ENCODE measurements at regions of chr17 and their contacts with region 1.

Region 1: DNA sequence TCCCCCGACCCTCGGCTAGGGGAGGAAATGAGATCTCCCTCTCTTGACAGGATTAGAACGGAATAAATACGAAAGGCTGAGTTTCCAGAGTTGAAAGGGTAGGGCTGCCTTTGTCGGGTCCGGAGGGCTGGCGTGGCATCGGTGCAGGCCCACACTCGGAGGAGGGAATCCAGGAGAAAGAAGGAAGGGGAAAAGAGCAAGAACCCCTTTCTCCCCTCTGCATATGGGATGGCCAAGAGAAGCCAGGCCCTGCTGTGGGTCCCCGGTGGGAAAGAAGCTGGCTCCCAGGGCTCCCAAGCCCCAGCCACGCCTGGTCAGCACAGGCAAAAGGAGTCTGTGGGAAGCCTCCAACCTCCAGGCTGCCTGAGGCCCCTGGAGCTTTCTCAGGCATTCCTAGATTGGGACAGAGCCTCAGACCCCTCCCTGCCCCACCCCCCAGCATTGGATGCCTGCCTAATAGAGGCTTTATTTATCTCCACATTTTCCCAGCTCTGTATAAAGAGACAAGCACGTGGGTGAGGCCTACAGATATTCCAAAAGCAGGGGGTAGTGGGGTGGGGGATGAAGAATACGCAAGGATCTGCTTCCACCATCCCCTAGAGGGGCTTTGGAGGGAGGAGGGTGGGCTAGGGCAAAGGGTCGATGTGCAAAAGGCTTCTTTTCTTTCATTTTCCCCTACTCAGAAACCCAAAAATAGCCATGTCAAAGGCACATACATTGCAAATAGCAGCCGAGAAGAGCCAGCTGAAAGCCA is 56.3 kb downstream of the MPRIP start:
- DNase-seq: peak; percentile 70 to 79 (median 76)
- ATAC-seq: peak; percentile 19 to 68 (median 50)
- H3K4me3 ChIP-seq: peak overlapping the region in 1 of 12 donors; percentile 19
- H3K27ac ChIP-seq: peak overlapping the region; percentile 29 to 85 (median 73)
- H3K4me1 ChIP-seq: peaks cover 20 to 100% (median 82%) of the 10 kb centered on the region in 12 donors
- H3K27me3 ChIP-seq: no peaks in the 10 kb centered on the region
- CTCF ChIP-seq: no peak
- POLR2A ChIP-seq: no peak

Region 2: DNA sequence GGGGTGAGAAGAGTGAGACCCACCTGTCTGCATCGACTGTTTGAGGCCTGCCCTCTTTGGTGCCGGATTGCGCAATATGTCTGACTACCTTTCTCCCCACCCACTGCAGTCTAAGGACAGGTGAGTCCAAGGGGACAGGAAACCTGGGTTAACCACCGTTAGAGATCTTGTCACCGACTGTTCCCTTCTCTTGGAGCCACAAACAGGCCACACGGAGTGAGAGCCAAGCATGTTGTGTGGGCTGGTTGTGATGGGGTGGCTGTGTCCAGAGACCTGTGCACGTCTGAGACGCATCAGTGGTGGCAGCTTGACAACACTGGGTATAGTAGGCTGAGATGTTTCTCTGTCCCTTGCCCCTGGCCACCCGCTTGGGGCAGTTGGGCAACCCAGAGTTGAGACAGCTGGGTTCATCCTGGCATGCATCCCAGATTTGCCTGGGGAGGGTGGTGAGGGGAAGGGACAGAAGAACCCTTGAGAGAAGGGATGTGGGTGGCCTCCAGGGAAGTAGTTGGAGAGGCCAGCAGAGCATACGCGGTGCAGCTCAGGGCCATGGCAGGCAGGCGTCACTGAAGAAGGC is 35.0 kb before region 1 on chr17:
- intact Hi-C with region 1: loop called in 1 of 10 experiments (anchors 5 kb)
- DNase-seq: peak; percentile 58 to 83 (median 80)
- ATAC-seq: peak; percentile 33 to 70 (median 60)
- H3K4me3 ChIP-seq: no peak overlapping the region
- H3K27ac ChIP-seq: peak overlapping the region in 6 of 12 donors; percentile 4 to 26 (median 9)
- H3K4me1 ChIP-seq: peaks cover 0 to 94% (median 71%) of the 10 kb centered on the region in 12 donors
- H3K27me3 ChIP-seq: no peaks in the 10 kb centered on the region
- CTCF ChIP-seq: no peak
- POLR2A ChIP-seq: no peak

Measured in heart left ventricle (tissue), 16 donors.